Posterior vena cava (tissue), 2 donors: ENCODE measurements at regions of chr6 and their contacts with region 1.

Region 1: DNA sequence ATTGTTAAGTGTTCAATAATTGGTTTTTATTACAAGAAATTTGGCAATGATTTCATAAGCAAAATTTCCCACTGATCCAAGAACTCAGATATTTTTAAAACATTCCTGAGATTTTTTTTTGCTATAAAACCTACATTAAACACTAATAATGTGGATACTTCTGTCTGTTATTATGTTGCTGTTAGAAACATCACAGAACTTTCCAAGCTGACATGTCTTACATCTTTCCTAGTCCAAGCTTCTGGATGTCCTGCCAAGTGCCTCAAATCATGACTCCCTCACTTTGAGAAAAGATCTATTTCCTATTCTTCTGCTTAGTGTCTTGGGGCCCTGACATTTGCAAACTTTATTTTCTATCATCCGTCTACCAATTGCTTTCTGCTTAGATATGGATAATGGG is 110.8 kb downstream of the RFPL4B start:
- DNase-seq: no peak

Region 2: GRCh38 chr6:112490316-112490715 is 32.4 kb after region 1 on chr6:
- intact Hi-C with region 1: loop called in 1 of 2 experiments (anchors 1 kb)
- DNase-seq: no peak